CD4-positive, alpha-beta memory T cell (primary cell): ENCODE measurements at regions of chr9 and their contacts with region 1.

Region 1: DNA sequence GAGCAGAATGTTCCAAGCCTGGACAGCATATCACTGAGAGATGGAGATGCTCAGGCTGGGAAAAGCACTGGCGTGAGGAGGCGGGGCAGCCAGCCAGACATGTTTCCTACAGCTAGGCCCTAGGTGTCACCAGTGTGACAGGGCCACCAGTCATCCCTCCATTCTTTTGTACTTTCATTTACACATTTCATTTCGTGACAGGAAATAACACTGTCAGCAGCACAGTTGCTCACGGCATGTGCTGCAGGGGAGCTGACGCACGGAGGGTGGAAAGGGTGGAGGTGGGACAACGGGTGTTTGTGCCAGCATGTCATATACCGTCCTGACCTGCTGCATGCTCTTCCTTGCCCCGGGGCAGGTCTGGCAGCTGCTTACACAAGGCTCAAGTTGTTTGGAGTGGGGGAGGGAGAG is 14.8 kb upstream of the CEMIP2 start:
- DNase-seq: peak; percentile 86 to 95 (median 90)
- H3K4me3 ChIP-seq: no peak overlapping the region
- H3K4me3 Mint-ChIP-seq: peak overlapping the region; percentile 64 to 86 (median 82)
- H3K27ac ChIP-seq: peak overlapping the region; percentile 83
- H3K27ac Mint-ChIP-seq: peak overlapping the region; percentile 93 to 100 (median 99)
- H3K4me1 ChIP-seq: peaks cover 41% of the 10 kb centered on the region
- H3K4me1 Mint-ChIP-seq: peaks cover 36 to 51% (median 40%) of the 10 kb centered on the region in 4 donors
- H3K27me3 ChIP-seq: no peaks in the 10 kb centered on the region
- H3K27me3 Mint-ChIP-seq: no peaks in the 10 kb centered on the region

Region 2: DNA sequence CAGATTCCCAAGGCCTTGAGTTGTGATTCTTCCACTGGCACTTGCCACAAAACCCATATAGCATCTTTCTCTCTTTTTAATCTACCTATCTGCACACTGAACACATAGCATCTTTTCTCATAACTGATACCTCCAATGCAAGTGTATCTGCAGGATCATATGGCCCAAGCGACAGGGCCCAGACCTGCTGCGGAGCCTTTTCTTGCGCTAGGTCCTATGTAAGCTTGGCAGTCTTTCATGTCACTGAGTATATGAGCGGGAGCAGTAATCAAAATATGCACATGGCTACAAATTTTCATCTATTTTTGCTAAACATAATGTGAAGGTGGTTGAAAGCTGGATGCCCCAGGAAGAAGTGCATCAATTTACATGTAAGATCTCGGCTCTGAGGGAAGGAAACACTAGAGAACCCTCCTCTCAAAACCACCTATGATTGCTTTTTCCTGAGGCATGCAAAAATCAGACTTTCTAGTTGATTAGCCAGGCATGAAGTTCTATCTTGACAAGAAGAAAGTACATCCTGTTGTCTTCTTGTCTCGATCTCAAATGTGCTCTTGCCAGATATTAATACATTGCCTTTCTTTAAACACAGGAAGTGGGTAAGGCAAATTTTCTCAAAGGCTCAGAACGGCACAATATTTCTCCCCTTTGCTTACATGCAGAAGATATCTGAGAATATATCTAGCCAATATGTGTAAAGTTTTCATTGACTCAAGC is 12.1 kb after region 1 on chr9:
- CTCF ChIA-PET with region 1: interaction called, 97 read pairs
- POLR2A ChIA-PET with region 1: interaction called, 144 read pairs
- intact Hi-C with region 1: loop called (anchors 1 kb)
- DNase-seq: peak; percentile 47 to 81 (median 74)
- H3K4me3 ChIP-seq: peak overlapping the region; percentile 10 to 14
- H3K4me3 Mint-ChIP-seq: peak overlapping the region; percentile 61 to 79 (median 70)
- H3K27ac ChIP-seq: peak overlapping the region; percentile 49
- H3K27ac Mint-ChIP-seq: peak overlapping the region; percentile 85 to 97 (median 92)
- H3K4me1 ChIP-seq: peaks cover 74% of the 10 kb centered on the region
- H3K4me1 Mint-ChIP-seq: peaks cover 39 to 68% (median 57%) of the 10 kb centered on the region in 4 donors
- H3K27me3 ChIP-seq: no peaks in the 10 kb centered on the region
- H3K27me3 Mint-ChIP-seq: no peaks in the 10 kb centered on the region

Region 3: DNA sequence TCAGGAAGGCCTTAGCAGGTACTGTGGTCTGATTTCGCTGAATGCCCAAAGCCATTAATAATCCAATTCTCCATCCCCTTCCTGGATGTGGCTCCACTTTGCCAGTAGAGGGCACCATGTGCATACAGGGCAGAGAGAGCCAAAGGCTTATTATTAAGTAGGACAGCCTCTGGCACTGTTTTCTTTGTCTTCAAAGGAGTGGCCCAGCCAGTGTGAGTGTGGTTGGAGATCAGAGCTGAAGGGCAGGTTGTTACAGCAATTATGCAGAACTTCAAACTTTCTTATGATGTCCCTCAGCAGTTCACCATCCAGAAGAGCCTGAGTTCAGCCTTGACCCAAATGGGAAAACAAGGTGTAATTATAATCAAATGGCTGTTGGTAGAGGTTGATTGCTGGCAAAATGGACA is 23.8 kb after region 1 on chr9:
- CTCF ChIA-PET with region 1: interaction called, 58 read pairs
- POLR2A ChIA-PET with region 1: interaction called, 18 read pairs
- intact Hi-C with region 1: loop called (anchors 1 kb)
- DNase-seq: peak; percentile 60 to 64 (median 63)
- H3K4me3 ChIP-seq: no peak overlapping the region
- H3K4me3 Mint-ChIP-seq: peak overlapping the region in 2 of 8 donors; percentile 18 to 32
- H3K27ac ChIP-seq: no peak overlapping the region
- H3K27ac Mint-ChIP-seq: peak overlapping the region in 6 of 7 donors; percentile 2 to 93 (median 54)
- H3K4me1 ChIP-seq: peaks cover 7% of the 10 kb centered on the region
- H3K4me1 Mint-ChIP-seq: peaks cover 5 to 7% (median 6%) of the 10 kb centered on the region in 4 donors
- H3K27me3 ChIP-seq: no peaks in the 10 kb centered on the region
- H3K27me3 Mint-ChIP-seq: no peaks in the 10 kb centered on the region

Region 4: DNA sequence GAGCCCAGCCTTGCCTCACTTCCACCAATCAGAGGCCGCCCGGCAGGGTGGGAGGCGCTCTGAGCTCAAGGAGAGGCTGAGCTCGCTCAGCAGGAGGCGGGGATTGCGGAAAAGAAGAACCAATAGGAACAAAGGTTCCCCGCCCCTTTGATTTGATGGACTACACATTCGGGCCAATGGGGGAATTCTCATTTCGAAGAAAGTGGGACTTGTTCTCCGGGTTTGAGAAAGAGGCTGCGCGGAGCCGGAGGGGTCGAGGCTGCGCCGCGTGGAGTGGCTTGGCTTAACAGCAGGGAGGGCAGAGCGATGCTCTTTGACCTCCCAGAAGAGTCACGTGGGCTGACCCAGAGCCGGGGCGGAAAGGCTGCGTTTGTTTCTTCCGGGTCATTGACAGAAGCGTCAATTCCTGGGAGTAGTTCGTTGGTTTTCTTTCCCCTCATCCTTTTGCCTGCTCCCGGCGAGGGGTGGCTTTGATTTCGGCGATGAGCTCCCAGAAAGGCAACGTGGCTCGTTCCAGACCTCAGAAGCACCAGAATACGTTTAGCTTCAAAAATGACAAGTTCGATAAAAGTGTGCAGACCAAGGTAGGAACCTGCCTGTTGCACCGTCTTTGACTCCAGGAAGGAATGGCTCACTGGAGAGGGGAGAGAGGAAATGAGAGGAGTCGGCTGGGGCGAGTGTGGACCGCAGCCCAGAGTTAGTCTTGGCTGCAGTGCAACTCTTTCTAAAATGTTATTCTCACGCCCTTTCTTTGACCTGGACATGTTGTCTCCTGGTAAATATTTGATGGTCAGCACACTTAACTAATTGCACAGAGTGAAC is 128.3 kb after region 1 on chr9 and contains the start of gene C9orf85:
- CTCF ChIA-PET with region 1: interaction called, 4 read pairs
- POLR2A ChIA-PET with region 1: interaction called, 10 read pairs
- intact Hi-C with region 1: loop called (anchors 1 kb)
- DNase-seq: peak; percentile 94 to 98 (median 96)
- H3K4me3 ChIP-seq: peak within 1 kb of the TSS; percentile 77 to 83
- H3K4me3 Mint-ChIP-seq: peak within 1 kb of the TSS; percentile 99 to 100 (median 100)
- H3K27ac ChIP-seq: peak within 1 kb of the TSS; percentile 74
- H3K27ac Mint-ChIP-seq: peak within 1 kb of the TSS; percentile 92 to 100 (median 97)
- H3K4me1 ChIP-seq: peaks cover 51% of the 10 kb centered on the region
- H3K4me1 Mint-ChIP-seq: peaks cover 46 to 76% (median 54%) of the 10 kb centered on the region in 4 donors
- H3K27me3 ChIP-seq: no peaks in the 10 kb centered on the region
- H3K27me3 Mint-ChIP-seq: no peaks in the 10 kb centered on the region
- total RNA-seq, gene C9orf85: 8.2 to 10.6 TPM

Region 5: GRCh38 chr9:73149371-73150067 is 1366.4 kb after region 1 on chr9:
- CTCF ChIA-PET with region 1: no interaction called
- POLR2A ChIA-PET with region 1: interaction called, 3 read pairs
- intact Hi-C with region 1: loop called (anchors 5 kb)
- DNase-seq: peak in 4 of 5 donors; percentile 33 to 68 (median 50)
- H3K4me3 ChIP-seq: peak overlapping the region in 1 of 2 donors; percentile 17
- H3K4me3 Mint-ChIP-seq: peak overlapping the region; percentile 37 to 83 (median 78)
- H3K27ac ChIP-seq: peak overlapping the region; percentile 75
- H3K27ac Mint-ChIP-seq: peak overlapping the region; percentile 82 to 99 (median 95)
- H3K4me1 ChIP-seq: peaks cover 41% of the 10 kb centered on the region
- H3K4me1 Mint-ChIP-seq: peaks cover 24 to 51% (median 32%) of the 10 kb centered on the region in 4 donors
- H3K27me3 ChIP-seq: no peaks in the 10 kb centered on the region
- H3K27me3 Mint-ChIP-seq: no peaks in the 10 kb centered on the region